H1 (cell line): ENCODE measurements at regions of chr9 and their contacts with region 1.

Region 1: DNA sequence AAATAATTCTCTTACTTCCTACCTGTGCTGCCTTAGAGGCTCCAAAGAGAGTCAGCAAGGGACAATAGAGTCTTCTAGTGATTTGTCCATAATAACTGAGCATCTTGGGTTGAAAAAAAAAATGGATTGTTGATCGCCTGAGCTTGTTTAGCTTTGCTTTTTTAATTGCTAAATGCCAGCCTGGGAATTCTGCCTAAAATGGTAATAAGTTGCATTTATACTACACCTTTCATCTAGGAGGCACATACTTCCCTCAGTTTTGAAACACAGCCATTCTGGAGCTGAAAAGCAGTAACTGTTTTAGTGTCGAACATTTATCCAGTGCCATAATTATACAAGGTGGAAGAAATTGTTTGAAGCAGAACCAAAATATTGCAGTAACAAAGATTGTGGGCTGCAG is 421.3 kb downstream of the CAAP1 start:
- DNase-seq: no peak
- H3K4me3 ChIP-seq: no peak overlapping the region
- H3K27ac ChIP-seq: no peak overlapping the region
- H3K4me1 ChIP-seq: no peaks in the 10 kb centered on the region
- H3K27me3 ChIP-seq: no peaks in the 10 kb centered on the region
- CTCF ChIP-seq: no peak
- EP300 ChIP-seq: no peak
- POLR2A ChIP-seq: no peak
- RAD21 ChIP-seq: no peak

Region 2: DNA sequence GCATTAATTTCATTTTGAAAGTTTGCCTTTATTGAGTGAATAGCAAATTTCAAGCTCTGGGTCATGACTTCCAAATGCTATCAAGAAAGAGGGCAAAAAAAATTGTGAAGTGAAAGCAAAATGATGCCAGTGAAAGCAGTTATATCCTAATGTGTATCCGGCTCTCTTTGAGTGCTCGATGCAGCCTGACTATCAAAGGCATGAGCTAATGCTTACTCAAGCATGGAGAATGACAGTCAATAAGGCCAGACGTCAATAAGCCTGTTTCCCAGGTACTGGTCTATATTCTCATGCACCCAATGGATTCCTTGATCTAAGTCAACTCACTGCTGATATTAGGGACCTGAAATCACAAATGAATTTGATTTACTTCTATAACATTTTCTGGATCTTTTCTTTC is 14.1 kb before region 1 on chr9:
- CTCF ChIA-PET with region 1: interaction called, 11 read pairs
- POLR2A ChIA-PET with region 1: no interaction called
- DNase-seq: no peak
- H3K4me3 ChIP-seq: no peak overlapping the region
- H3K27ac ChIP-seq: no peak overlapping the region
- H3K4me1 ChIP-seq: no peaks in the 10 kb centered on the region
- H3K27me3 ChIP-seq: no peaks in the 10 kb centered on the region
- CTCF ChIP-seq: no peak
- EP300 ChIP-seq: no peak
- POLR2A ChIP-seq: no peak
- RAD21 ChIP-seq: no peak

Region 3: GRCh38 chr9:26535151-26535550 is 63.9 kb after region 1 on chr9:
- CTCF ChIA-PET with region 1: no interaction called
- POLR2A ChIA-PET with region 1: no interaction called
- DNase-seq: no peak
- H3K4me3 ChIP-seq: no peak overlapping the region
- H3K27ac ChIP-seq: no peak overlapping the region
- H3K4me1 ChIP-seq: no peaks in the 10 kb centered on the region
- H3K27me3 ChIP-seq: no peaks in the 10 kb centered on the region
- CTCF ChIP-seq: no peak
- EP300 ChIP-seq: no peak
- POLR2A ChIP-seq: no peak
- RAD21 ChIP-seq: no peak